ENCODE measurements at regions of chr7 and their contacts with region 1.

Region 1: GRCh38 chr7:159192013-159192412 is 47.3 kb upstream of the VIPR2 start:
- DNase-seq: peak in 1 of 2 donors; percentile 43
- H3K4me3 ChIP-seq: no peak overlapping the region
- CTCF ChIP-seq: no peak
- POLR2A ChIP-seq: no peak

Region 2: GRCh38 chr7:158754746-158755444 is 437.1 kb before region 1 on chr7:
- intact Hi-C with region 1: no loop called
- DNase-seq: no peak
- H3K4me3 ChIP-seq: no peak overlapping the region
- CTCF ChIP-seq: no peak
- POLR2A ChIP-seq: no peak

Region 3: GRCh38 chr7:159175792-159176191 is 16.2 kb before region 1 on chr7:
- intact Hi-C with region 1: loop called (anchors 1 kb)
- DNase-seq: no peak
- H3K4me3 ChIP-seq: no peak overlapping the region
- CTCF ChIP-seq: no peak
- POLR2A ChIP-seq: no peak